ENCODE measurements at regions of chr15 and their contacts with region 1.

Region 1: GRCh38 chr15:74460871-74461846 is at the start of gene UBL7:
- DNase-seq: peak; percentile 77
- ATAC-seq: peak; percentile 92
- H3K4me3 ChIP-seq: peak within 1 kb of the TSS; percentile 92
- H3K27ac ChIP-seq: peak within 1 kb of the TSS; percentile 93
- H3K4me1 ChIP-seq: peaks cover 11% of the 10 kb centered on the region
- H3K27me3 ChIP-seq: no peaks in the 10 kb centered on the region
- CTCF ChIP-seq: peak in 2 of 3 experiments; percentile 7 to 48; a peak in 3 of 6 replicates
- EP300 ChIP-seq: no peak
- POLR2A ChIP-seq: peak; percentile 98
- RAD21 ChIP-seq: no peak
- polyA plus RNA-seq, gene UBL7: 25.9 to 59.1 TPM

Region 2: DNA sequence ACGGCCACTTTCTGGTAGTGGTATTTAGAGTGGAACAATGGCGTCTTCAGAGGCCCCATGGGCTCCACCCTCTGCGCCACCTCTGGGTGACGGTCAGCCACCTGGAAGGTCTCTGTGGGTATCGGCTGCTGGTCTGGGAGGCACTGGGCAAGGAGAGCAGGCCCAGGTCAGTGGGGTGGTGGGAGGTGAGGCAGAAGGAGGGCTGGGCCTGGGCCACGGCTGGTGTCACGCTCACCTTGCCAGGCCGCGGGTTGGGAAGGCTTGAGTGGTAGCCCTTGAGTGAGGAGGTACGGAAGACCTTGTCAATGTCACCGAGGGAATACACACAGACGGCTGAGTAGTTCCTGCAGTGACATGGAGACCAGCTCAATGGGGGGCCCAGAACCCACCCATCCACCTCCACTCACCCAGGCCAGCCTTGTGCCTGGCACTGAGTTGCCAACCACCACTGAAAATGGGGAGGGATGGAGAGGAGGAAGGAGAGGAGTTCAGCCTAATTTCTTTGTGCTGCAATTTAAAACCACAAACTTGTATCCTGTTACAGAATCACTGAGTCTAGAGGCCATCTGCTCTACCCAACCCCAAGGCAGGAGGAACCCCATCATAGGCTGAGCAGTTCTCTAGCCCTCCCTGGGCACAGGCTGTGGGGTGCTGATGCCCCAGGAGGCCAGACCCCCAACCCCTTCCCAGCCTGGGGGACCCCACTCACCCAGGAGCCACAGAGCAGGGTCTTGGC is 46.4 kb before region 1 on chr15:
- CTCF ChIA-PET with region 1: no interaction called
- POLR2A ChIA-PET with region 1: no interaction called
- RAD21 ChIA-PET with region 1: no interaction called
- SMC1A ChIA-PET with region 1: no interaction called
- in situ Hi-C with region 1: no loop called
- intact Hi-C with region 1: no loop called
- DNase-seq: no peak
- ATAC-seq: no peak
- H3K4me3 ChIP-seq: no peak overlapping the region
- H3K27ac ChIP-seq: no peak overlapping the region
- H3K4me1 ChIP-seq: peaks cover 14% of the 10 kb centered on the region
- H3K27me3 ChIP-seq: no peaks in the 10 kb centered on the region
- CTCF ChIP-seq: no peak
- EP300 ChIP-seq: no peak
- POLR2A ChIP-seq: peak; percentile 49
- RAD21 ChIP-seq: no peak

Region 3: GRCh38 chr15:74433592-74434262 is 27.4 kb before region 1 on chr15 and contains the start of gene SEMA7A:
- CTCF ChIA-PET with region 1: interaction called, 26 read pairs
- POLR2A ChIA-PET with region 1: interaction called, 6 read pairs
- RAD21 ChIA-PET with region 1: interaction called, 7 read pairs
- SMC1A ChIA-PET with region 1: interaction called, 5 read pairs
- in situ Hi-C with region 1: no loop called
- intact Hi-C with region 1: loop called (anchors 1 kb)
- DNase-seq: peak; percentile 57
- ATAC-seq: peak; percentile 81
- H3K4me3 ChIP-seq: peak within 1 kb of the TSS; percentile 98
- H3K27ac ChIP-seq: peak within 1 kb of the TSS; percentile 87
- H3K4me1 ChIP-seq: peaks cover 32% of the 10 kb centered on the region
- H3K27me3 ChIP-seq: no peaks in the 10 kb centered on the region
- CTCF ChIP-seq: no peak
- EP300 ChIP-seq: peak in 1 of 2 experiments; percentile 25; a peak in 2 of 4 replicates
- POLR2A ChIP-seq: peak; percentile 98
- RAD21 ChIP-seq: no peak
- polyA plus RNA-seq, gene SEMA7A: 0.08 to 1.1 TPM

Region 4: DNA sequence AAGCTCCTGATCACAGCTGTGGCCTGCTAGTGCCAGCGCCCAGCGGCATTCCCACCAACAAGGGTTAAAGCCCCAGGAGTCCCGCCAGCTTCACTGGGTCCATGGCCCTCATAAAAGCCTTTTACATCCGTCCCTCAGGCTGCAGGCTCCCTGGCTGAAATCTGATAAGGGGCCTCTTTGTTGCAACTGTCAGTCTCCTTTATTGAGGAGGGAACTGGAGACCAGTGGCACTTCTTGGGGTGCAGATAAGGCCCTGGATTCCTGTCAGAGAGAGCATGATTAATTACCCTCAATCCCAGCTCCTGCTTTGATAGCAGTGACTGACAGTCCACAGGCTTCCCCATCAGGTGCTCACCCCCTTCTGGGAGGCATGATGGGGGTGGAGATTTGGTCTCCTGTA is 123.6 kb after region 1 on chr15:
- CTCF ChIA-PET with region 1: no interaction called
- POLR2A ChIA-PET with region 1: no interaction called
- RAD21 ChIA-PET with region 1: no interaction called
- SMC1A ChIA-PET with region 1: no interaction called
- in situ Hi-C with region 1: no loop called
- intact Hi-C with region 1: no loop called
- DNase-seq: no peak
- ATAC-seq: no peak
- H3K4me3 ChIP-seq: no peak overlapping the region
- H3K27ac ChIP-seq: no peak overlapping the region
- H3K4me1 ChIP-seq: no peaks in the 10 kb centered on the region
- H3K27me3 ChIP-seq: no peaks in the 10 kb centered on the region
- CTCF ChIP-seq: no peak
- EP300 ChIP-seq: no peak
- POLR2A ChIP-seq: no peak
- RAD21 ChIP-seq: no peak

Region 5: GRCh38 chr15:74598126-74598842 is 137.1 kb after region 1 on chr15:
- CTCF ChIA-PET with region 1: no interaction called
- POLR2A ChIA-PET with region 1: no interaction called
- RAD21 ChIA-PET with region 1: no interaction called
- SMC1A ChIA-PET with region 1: no interaction called
- in situ Hi-C with region 1: no loop called
- intact Hi-C with region 1: no loop called
- DNase-seq: peak; percentile 69
- ATAC-seq: peak; percentile 99
- H3K4me3 ChIP-seq: peak overlapping the region; percentile 74
- H3K27ac ChIP-seq: peak overlapping the region; percentile 73
- H3K4me1 ChIP-seq: peaks cover 12% of the 10 kb centered on the region; the same call in 1 of the 2 replicates
- H3K27me3 ChIP-seq: no peaks in the 10 kb centered on the region
- CTCF ChIP-seq: no peak
- EP300 ChIP-seq: no peak
- POLR2A ChIP-seq: peak; percentile 95
- RAD21 ChIP-seq: no peak

Region 6: DNA sequence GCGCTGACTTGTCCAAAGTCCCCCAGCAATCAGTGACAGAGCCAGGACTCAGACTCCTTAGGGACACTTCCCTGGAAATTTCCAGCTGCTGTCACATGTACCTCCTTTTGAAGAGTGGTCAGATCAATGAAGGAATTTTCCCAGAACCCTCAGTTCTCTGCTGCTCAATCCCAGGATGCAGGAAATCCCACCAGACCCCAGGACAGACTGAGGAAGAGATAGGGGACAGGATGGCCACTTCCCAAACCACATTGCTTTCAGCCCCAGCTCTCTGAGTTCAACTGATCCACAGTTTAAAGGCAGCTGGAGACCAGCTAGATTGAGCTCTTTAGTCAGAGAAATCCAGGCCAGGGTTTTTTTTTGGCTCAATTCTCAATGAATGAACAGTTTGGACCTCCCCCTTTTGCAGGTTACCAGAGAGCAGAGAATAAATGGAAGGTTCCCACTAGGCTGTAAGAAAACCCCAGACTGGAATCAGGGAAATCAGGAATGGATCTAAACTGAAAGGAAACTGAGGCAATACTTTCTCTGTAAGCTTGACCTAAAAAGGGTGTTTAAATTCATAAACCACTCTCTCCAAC is 262.7 kb after region 1 on chr15:
- CTCF ChIA-PET with region 1: no interaction called
- POLR2A ChIA-PET with region 1: no interaction called
- RAD21 ChIA-PET with region 1: no interaction called
- SMC1A ChIA-PET with region 1: no interaction called
- in situ Hi-C with region 1: no loop called
- intact Hi-C with region 1: no loop called
- DNase-seq: no peak
- ATAC-seq: peak; percentile 48; the same call in 2 of the 3 replicates
- H3K4me3 ChIP-seq: no peak overlapping the region
- H3K27ac ChIP-seq: no peak overlapping the region
- H3K4me1 ChIP-seq: peaks cover 4% of the 10 kb centered on the region
- H3K27me3 ChIP-seq: peaks cover 0 to 3% of the 10 kb centered on the region in 2 experiments; a peak in 3 of 4 replicates
- CTCF ChIP-seq: no peak
- EP300 ChIP-seq: no peak
- POLR2A ChIP-seq: no peak
- RAD21 ChIP-seq: no peak